ENCODE measurements at regions of chr4 and their contacts with region 1.

Region 1: DNA sequence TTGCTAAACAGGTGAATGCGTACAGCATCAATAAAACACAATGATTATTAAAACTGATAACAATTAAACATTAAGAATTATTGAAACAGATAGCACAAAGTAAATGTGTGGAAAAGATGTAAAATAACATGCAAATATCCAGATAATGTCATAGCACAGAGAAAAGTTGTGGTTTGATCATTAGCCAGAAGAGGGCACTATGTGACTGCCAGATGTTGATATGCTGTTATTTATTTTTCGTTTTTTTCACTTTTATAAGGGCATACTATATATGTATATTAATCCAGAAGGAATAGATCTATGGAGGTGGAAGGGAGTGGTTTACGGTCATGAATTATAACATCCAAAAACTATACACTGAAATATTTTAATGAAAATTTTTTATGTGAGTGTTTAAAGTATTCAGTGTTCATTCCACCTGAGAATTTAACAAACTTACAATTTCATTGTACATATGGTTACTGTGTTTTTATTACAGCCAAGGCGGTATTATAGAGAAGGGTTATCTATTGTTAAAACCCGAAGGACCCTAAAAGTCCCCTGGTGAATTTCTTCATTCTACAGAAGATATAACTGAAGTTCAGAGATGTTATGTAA is 211.9 kb upstream of the UGT8 start:
- DNase-seq: no peak
- H3K4me3 ChIP-seq: no peak overlapping the region
- H3K27ac ChIP-seq: no peak overlapping the region
- H3K4me1 ChIP-seq: no peaks in the 10 kb centered on the region
- H3K27me3 ChIP-seq: no peaks in the 10 kb centered on the region
- CTCF ChIP-seq: peak; percentile 45

Region 2: GRCh38 chr4:113781439-113782040 is 605.2 kb before region 1 on chr4:
- intact Hi-C with region 1: loop called (anchors 10 kb)
- DNase-seq: no peak
- H3K4me3 ChIP-seq: no peak overlapping the region
- H3K27ac ChIP-seq: no peak overlapping the region
- H3K4me1 ChIP-seq: no peaks in the 10 kb centered on the region
- H3K27me3 ChIP-seq: no peaks in the 10 kb centered on the region
- CTCF ChIP-seq: peak; percentile 55

Region 3: GRCh38 chr4:114659386-114660008 is 272.8 kb after region 1 on chr4:
- intact Hi-C with region 1: loop called (anchors 5 kb)
- DNase-seq: peak; percentile 75
- H3K4me3 ChIP-seq: no peak overlapping the region
- H3K27ac ChIP-seq: no peak overlapping the region
- H3K4me1 ChIP-seq: no peaks in the 10 kb centered on the region
- H3K27me3 ChIP-seq: no peaks in the 10 kb centered on the region
- CTCF ChIP-seq: peak; percentile 85

Region 4: DNA sequence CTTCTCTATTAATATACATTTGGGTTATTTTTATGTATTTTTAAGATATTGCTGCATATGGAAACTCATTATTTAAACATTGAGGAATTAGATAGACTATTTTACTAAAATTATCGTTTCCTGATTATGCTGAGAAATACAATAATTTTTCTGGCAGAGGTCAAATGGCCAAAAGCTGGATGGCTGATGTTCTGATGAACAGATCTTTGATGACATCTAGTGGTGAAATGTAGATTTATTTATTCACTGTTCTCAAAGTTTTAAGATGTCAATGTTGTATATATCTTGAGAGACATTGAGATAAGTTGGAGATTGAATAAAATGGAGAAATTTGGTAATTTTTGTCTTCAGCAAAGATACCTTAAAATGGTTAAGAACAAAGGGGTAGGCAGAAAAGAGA is 308.0 kb after region 1 on chr4:
- intact Hi-C with region 1: loop called (anchors 2 kb)
- DNase-seq: no peak
- H3K4me3 ChIP-seq: no peak overlapping the region
- H3K27ac ChIP-seq: no peak overlapping the region
- H3K4me1 ChIP-seq: no peaks in the 10 kb centered on the region
- H3K27me3 ChIP-seq: no peaks in the 10 kb centered on the region
- CTCF ChIP-seq: peak; percentile 50

Measured in colonic mucosa (tissue), 4 donors.